ENCODE measurements at regions of chr1 and their contacts with region 1.

Region 1: DNA sequence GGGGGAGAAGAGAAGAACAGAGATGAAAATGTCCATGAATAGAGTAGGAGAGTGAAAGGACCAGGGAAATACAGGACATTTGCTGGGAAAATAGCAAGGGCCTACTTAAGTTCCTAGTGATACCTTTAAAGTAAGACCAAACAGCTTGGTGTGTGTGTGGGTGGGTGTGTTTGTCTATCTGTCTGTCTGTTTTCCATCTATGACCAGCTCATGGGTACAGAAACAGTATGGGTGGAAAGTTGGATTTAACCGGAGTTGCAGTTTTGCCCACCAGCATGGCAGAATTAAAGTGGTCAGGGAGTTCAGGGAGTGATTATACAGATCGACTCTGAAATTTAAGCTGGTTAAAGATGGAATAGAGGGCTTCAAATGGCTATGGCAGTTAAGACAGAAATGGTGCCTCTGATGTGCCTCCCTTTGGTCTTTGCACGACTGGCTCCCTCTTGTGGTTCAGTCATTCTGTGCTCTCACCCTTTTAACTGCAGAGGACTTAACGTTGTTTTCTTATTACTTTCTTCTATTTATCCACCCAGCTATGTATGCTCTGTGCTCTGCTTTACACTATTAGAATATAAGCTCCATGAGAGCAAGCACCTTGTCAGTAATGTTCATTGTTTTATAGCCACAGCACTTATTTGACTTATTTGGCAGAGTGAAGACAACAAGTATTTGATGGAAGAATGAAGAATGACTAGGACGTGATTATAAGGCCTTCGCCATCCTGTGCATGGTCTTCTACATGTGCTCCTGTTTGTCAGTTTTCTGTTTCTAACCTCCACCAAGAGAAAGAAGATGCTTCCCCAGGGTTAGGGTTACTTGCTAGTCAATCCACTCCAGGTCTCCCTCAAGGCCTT is 72.7 kb upstream of the AK4 start:
- DNase-seq: no peak
- ATAC-seq: peak; percentile 89 to 95
- H3K4me3 ChIP-seq: no peak overlapping the region
- H3K27ac ChIP-seq: no peak overlapping the region
- H3K4me1 ChIP-seq: no peaks in the 10 kb centered on the region
- H3K27me3 ChIP-seq: no peaks in the 10 kb centered on the region
- CTCF ChIP-seq: peak; percentile 79

Region 2: DNA sequence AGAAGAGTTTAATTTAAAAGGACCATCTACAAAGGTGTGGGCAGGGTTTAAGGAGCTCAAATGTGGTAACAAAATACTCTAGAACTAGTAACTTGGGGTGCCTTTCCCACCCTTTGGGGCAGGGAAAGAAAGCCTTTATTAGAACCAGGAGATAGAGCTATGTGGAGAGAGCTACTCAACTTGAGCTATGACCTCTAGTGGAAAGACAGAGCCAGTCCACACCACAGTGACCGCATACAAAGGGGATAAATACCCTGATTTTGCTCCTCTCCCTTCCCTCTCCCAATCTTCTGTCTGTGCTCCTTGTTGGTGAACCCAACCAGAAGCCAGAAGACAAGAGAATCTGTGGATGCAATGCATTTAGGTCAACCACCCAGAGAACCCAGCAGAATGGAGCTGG is 54.6 kb before region 1 on chr1:
- intact Hi-C with region 1: no loop called
- DNase-seq: no peak
- ATAC-seq: peak; percentile 47
- H3K4me3 ChIP-seq: no peak overlapping the region
- H3K27ac ChIP-seq: no peak overlapping the region
- H3K4me1 ChIP-seq: no peaks in the 10 kb centered on the region
- H3K27me3 ChIP-seq: no peaks in the 10 kb centered on the region
- CTCF ChIP-seq: peak; percentile 16

Region 3: GRCh38 chr1:65209005-65209885 is 133.9 kb after region 1 on chr1:
- intact Hi-C with region 1: loop called (anchors 10 kb)
- DNase-seq: no peak
- ATAC-seq: peak; percentile 52 to 76
- H3K4me3 ChIP-seq: no peak overlapping the region
- H3K27ac ChIP-seq: no peak overlapping the region
- H3K4me1 ChIP-seq: no peaks in the 10 kb centered on the region
- H3K27me3 ChIP-seq: no peaks in the 10 kb centered on the region
- CTCF ChIP-seq: peak; percentile 71

Measured in lower lobe of right lung (tissue), 2 donors.